Right ventricle myocardium superior (tissue), 1 donor: ENCODE measurements at regions of chr4 and their contacts with region 1.

Region 1: GRCh38 chr4:120049732-120050494 is 16.7 kb downstream of the MAD2L1 start:
- DNase-seq: peak; percentile 64
- ATAC-seq: peak; percentile 96

Region 2: GRCh38 chr4:119314356-119314755 is 735.6 kb before region 1 on chr4:
- intact Hi-C with region 1: loop called (anchors 5 kb)
- DNase-seq: no peak
- ATAC-seq: peak; percentile 88

Region 3: GRCh38 chr4:119564106-119564505 is 485.8 kb before region 1 on chr4:
- intact Hi-C with region 1: loop called (anchors 10 kb)
- DNase-seq: no peak
- ATAC-seq: no peak

Region 4: DNA sequence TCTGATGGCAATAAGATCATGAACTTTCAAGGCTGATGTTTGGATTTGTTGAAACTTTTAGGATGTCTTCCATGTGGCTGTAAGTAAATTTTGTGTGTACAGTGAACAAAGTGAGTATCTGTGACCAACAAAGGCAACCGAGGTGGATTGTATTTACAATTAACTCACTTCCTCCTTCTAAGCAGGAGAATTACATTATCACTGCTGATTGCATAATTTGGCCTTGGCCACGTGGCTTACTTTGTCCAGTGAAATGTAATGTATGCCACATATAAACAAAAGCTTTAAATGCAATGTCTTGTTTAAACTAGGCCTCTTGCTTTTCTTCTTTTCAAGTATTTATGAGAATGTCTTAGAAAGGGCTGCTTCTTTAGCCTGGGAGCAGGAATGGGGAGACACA is 83.0 kb after region 1 on chr4:
- intact Hi-C with region 1: no loop called
- DNase-seq: no peak
- ATAC-seq: no peak